Motor neuron (in vitro differentiated cells): ENCODE measurements at regions of chr3 and their contacts with region 1.

Region 1: GRCh38 chr3:116140100-116140689 is 305.1 kb downstream of the LSAMP start:
- ATAC-seq: peak in 2 of 8 experiments; percentile 5 to 32
- H3K4me3 ChIP-seq: no peak overlapping the region
- H3K27ac ChIP-seq: no peak overlapping the region
- H3K4me1 ChIP-seq: peaks cover 11 to 18% of the 10 kb centered on the region in 2 donors

Region 2: DNA sequence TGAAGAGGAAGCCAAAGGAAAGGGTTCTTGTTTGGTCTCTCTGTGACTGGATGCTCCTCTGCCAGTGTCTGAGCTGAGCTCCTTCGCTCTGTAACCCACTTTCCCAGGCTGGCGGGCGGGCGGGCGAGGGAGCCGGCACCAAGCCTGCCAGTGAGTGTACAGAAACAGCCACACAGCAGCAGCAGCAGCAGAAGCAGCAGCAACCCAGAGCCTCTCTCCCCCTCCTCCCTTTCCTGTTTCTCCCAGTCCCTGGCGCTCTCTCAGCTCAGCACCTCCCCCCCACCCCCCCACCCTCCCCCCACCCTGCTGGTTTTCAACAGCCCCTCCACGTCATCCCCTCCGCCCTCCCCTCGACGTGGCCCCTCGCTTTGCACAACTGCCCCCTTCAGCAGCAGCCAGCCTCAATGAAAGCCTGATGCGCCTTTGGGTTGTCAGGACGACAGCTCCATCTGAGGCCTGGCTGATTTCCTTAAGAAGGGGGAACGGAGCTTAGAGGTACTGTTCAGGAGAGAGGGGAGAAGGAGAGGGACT is 305.2 kb after region 1 on chr3 and contains the start of gene LSAMP:
- in situ Hi-C with region 1: loop called in 1 of 9 experiments (anchors 25 kb)
- ATAC-seq: peak; percentile 40 to 86 (median 85)
- H3K4me3 ChIP-seq: peak within 1 kb of the TSS; percentile 39 to 59 (median 43)
- H3K27ac ChIP-seq: peak within 1 kb of the TSS; percentile 8 to 75
- H3K4me1 ChIP-seq: peaks cover 30 to 39% of the 10 kb centered on the region in 2 donors
- total RNA-seq, gene LSAMP: 24.4 to 76.5 (median 39.2) TPM

Region 3: DNA sequence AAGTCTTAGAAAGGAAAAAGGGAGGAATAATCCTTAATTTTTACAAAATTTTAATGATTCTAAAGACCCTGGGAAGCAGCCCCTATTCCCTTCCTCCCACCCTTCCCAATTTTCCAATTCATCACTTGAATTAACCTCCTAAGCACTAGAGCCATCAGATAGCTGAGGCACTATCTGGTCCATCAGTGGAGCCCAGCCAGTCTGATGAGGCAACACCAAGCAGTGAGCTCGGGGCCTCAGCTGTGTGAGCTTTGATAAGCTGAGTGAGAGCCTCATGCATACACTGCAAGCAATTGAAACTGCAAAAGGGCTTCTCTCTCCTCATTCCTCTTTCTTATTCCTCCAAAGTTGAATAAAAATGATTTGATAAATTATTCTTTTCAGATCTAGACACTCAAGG is 601.3 kb after region 1 on chr3:
- in situ Hi-C with region 1: loop called in 1 of 9 experiments (anchors 25 kb)
- ATAC-seq: peak in 5 of 8 experiments; percentile 40 to 80 (median 58)
- H3K4me3 ChIP-seq: no peak overlapping the region
- H3K27ac ChIP-seq: no peak overlapping the region
- H3K4me1 ChIP-seq: no peaks in the 10 kb centered on the region

Region 4: GRCh38 chr3:116770815-116771450 is 630.7 kb after region 1 on chr3:
- in situ Hi-C with region 1: loop called in 2 of 9 experiments (anchors 25 kb)
- ATAC-seq: peak; percentile 85 to 95 (median 92)
- H3K4me3 ChIP-seq: no peak overlapping the region
- H3K27ac ChIP-seq: no peak overlapping the region
- H3K4me1 ChIP-seq: peaks cover 0 to 4% of the 10 kb centered on the region in 2 donors